Lower leg skin (tissue), 4 donors: ENCODE measurements at regions of chr2 and their contacts with region 1.

Region 1: DNA sequence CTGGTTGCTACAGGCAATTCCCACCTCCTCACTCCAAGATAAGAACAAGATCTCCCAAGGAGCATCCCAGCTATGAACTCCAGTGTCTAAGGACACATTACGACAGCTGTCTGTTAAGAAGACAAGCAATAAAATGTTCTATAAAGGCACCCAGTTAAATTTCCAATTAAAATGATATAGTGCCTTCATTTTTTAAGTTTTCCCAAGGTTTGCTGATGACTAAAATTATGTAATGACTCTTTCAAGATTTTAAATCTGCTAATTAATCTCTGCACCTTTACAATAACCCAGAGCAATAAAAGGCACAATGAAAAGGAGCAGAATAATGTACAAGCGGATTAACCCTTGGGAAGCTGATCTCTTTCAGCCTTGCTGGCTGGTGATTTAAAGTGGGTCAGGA is 61.6 kb upstream of the REG3G start:
- DNase-seq: no peak
- H3K4me3 ChIP-seq: no peak overlapping the region
- CTCF ChIP-seq: no peak
- POLR2A ChIP-seq: no peak

Region 2: DNA sequence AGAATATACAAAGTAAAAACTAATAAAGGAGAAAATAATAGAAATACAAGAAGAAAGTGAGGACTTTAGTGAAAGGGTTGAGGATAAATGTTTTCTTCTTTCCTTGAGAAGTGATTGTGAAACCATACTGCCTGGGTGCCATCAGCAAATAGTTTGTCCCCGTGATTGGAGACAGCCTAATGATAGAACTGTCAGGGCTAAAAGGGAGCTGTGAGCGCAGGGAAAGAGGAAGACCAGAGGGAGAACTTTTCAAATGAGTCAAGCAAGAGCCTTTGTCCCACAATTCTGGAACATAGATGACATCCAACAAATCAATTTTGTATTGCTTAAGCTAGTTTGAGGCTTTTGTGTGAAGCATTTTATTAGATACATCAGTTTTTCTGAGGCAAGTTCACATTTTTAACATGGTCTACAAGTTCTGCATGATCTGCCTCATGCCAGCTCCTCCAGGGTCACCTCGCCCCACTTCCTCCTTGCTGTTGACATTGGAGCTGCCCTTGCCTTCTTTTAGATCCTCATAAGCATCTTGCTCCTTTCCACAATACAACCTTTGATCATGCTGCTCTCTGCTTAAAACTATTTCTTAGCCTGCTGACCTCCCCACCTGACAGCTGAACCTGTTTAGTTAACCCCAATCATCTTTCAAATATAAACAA is 151.8 kb before region 1 on chr2:
- intact Hi-C with region 1: loop called (anchors 5 kb)
- DNase-seq: no peak
- H3K4me3 ChIP-seq: no peak overlapping the region
- CTCF ChIP-seq: no peak
- POLR2A ChIP-seq: no peak

Region 3: GRCh38 chr2:78992451-78992806 is 28.5 kb after region 1 on chr2:
- intact Hi-C with region 1: no loop called
- DNase-seq: no peak
- H3K4me3 ChIP-seq: no peak overlapping the region
- CTCF ChIP-seq: no peak
- POLR2A ChIP-seq: no peak

Region 4: GRCh38 chr2:79083597-79084273 is 119.9 kb after region 1 on chr2:
- intact Hi-C with region 1: no loop called
- DNase-seq: no peak
- H3K4me3 ChIP-seq: no peak overlapping the region
- CTCF ChIP-seq: no peak
- POLR2A ChIP-seq: no peak